ENCODE measurements at regions of chr5 and their contacts with region 1.

Region 1: GRCh38 chr5:64612344-64612961 is 77.8 kb upstream of the SHISAL2B start:
- DNase-seq: peak; percentile 16
- H3K4me3 ChIP-seq: no peak overlapping the region
- H3K27ac ChIP-seq: no peak overlapping the region
- H3K27me3 ChIP-seq: no peaks in the 10 kb centered on the region
- CTCF ChIP-seq: peak; percentile 82

Region 2: GRCh38 chr5:64147849-64148441 is 464.5 kb before region 1 on chr5:
- CTCF ChIA-PET with region 1: interaction called, 28 read pairs
- POLR2A ChIA-PET with region 1: no interaction called
- DNase-seq: no peak
- H3K4me3 ChIP-seq: no peak overlapping the region
- H3K27ac ChIP-seq: no peak overlapping the region
- H3K27me3 ChIP-seq: no peaks in the 10 kb centered on the region
- CTCF ChIP-seq: peak; percentile 74

Region 3: DNA sequence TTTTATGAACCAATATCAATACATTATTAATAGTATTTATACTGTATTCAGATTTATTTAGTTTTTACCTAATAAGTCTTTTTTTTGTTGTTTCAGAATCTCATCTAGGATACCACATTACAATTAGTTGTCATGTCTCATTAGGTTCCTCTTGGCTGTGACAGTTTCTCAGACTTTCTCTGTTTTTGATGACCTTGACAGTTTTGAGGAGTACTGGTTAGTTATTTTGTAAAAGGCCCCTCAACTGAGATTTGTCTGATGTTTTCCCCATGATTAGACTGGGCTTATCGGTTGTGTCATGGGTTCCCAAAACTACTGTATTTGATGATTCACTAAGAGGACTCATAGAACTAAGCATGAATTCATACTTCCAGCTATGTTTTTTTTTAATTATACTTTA is 390.5 kb before region 1 on chr5:
- CTCF ChIA-PET with region 1: interaction called, 19 read pairs
- POLR2A ChIA-PET with region 1: no interaction called
- DNase-seq: no peak
- H3K4me3 ChIP-seq: no peak overlapping the region
- H3K27ac ChIP-seq: no peak overlapping the region
- H3K27me3 ChIP-seq: no peaks in the 10 kb centered on the region
- CTCF ChIP-seq: no peak

Region 4: GRCh38 chr5:64229163-64229774 is 383.2 kb before region 1 on chr5:
- CTCF ChIA-PET with region 1: interaction called, 248 read pairs
- POLR2A ChIA-PET with region 1: no interaction called
- DNase-seq: no peak
- H3K4me3 ChIP-seq: no peak overlapping the region
- H3K27ac ChIP-seq: no peak overlapping the region
- H3K27me3 ChIP-seq: no peaks in the 10 kb centered on the region
- CTCF ChIP-seq: peak; percentile 67

Region 5: GRCh38 chr5:64595031-64595855 is 17.2 kb before region 1 on chr5:
- CTCF ChIA-PET with region 1: interaction called, 29 read pairs
- POLR2A ChIA-PET with region 1: no interaction called
- DNase-seq: no peak
- H3K4me3 ChIP-seq: no peak overlapping the region
- H3K27ac ChIP-seq: no peak overlapping the region
- H3K27me3 ChIP-seq: peaks cover 3% of the 10 kb centered on the region
- CTCF ChIP-seq: peak; percentile 33

Region 6: DNA sequence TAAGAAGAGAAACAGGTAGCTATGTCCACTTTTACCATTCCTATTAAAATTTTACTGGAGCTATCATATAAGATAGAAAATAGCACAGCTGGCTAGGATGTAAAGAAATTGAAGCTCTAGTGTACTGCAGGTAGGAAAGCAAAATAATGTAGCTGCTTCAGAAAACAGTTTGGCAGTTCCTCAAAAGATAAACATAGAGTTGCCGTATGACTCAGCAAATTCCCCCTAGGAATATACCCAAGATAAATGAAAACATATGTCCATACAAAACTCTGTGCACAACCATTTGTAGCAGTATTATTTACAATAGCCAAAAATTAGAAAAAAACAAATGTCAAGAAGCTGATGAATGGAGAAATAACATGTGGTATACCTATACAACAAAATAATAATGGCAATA is 13.2 kb after region 1 on chr5:
- CTCF ChIA-PET with region 1: interaction called, 12 read pairs
- POLR2A ChIA-PET with region 1: no interaction called
- DNase-seq: peak; percentile 8
- H3K4me3 ChIP-seq: no peak overlapping the region
- H3K27ac ChIP-seq: no peak overlapping the region
- H3K27me3 ChIP-seq: peaks cover 12% of the 10 kb centered on the region
- CTCF ChIP-seq: no peak

Region 7: GRCh38 chr5:64790210-64790609 is 177.8 kb after region 1 on chr5:
- CTCF ChIA-PET with region 1: no interaction called
- POLR2A ChIA-PET with region 1: no interaction called
- DNase-seq: no peak
- H3K4me3 ChIP-seq: no peak overlapping the region
- H3K27ac ChIP-seq: no peak overlapping the region
- H3K27me3 ChIP-seq: no peaks in the 10 kb centered on the region
- CTCF ChIP-seq: no peak